ENCODE measurements at regions of chr15 and their contacts with region 1.

Region 1: GRCh38 chr15:95291898-95292472 is 1038.5 kb upstream of the NR2F2 start:
- DNase-seq: no peak
- H3K4me3 ChIP-seq: no peak overlapping the region
- H3K27ac ChIP-seq: no peak overlapping the region
- H3K27me3 ChIP-seq: no peaks in the 10 kb centered on the region
- CTCF ChIP-seq: peak; percentile 67

Region 2: GRCh38 chr15:95277266-95277665 is 14.7 kb before region 1 on chr15:
- CTCF ChIA-PET with region 1: interaction called, 12 read pairs
- POLR2A ChIA-PET with region 1: interaction called, 8 read pairs
- DNase-seq: peak; percentile 91
- H3K4me3 ChIP-seq: no peak overlapping the region
- H3K27ac ChIP-seq: peak overlapping the region; percentile 22
- H3K27me3 ChIP-seq: no peaks in the 10 kb centered on the region
- CTCF ChIP-seq: no peak

Region 3: DNA sequence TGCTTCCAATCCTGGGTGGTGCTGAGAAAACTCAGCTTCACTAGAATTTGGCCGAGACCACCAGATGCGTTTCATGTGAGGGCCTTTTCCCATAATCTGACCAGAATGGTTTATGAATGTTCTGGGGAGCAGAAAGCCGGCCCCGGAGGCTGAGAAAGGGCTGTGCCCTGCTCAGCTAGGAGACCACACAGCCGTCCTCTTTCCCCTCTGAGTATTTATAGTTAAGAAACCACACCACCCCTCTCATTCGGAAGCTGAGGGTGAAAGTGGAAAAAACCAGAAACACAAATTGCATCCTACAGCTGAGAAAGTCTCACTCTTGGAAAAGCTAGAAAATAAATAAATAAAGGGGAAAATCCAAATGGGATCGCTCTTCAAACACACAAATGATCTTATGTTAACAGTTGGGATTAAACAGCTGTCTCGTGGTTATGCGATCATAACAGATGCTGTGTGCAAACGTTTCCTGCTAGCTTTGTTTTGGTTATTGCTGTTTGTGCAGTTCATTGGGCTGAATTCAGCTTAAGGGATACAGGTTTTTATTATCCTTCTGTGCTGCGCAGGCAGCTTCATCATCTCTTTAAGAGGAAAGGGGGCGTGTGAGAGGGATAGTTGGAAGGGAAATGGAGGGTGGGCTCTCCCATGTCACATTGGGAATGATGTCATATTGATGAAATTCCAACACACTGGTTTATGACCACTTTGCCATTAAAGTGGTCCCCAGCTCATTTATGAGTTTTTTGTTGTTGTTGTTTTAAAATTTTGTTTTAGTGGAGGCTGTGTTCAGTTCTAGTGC is 12.4 kb after region 1 on chr15:
- CTCF ChIA-PET with region 1: interaction called, 15 read pairs
- POLR2A ChIA-PET with region 1: interaction called, 8 read pairs
- DNase-seq: peak; percentile 91
- H3K4me3 ChIP-seq: no peak overlapping the region; the same call in none of the 2 replicates
- H3K27ac ChIP-seq: peak overlapping the region; percentile 77
- H3K27me3 ChIP-seq: no peaks in the 10 kb centered on the region
- CTCF ChIP-seq: no peak